Esophagus muscularis mucosa (tissue), 4 donors: ENCODE measurements at regions of chr2 and their contacts with region 1.

Region 1: GRCh38 chr2:238370823-238371372 is 50.6 kb downstream of the TRAF3IP1 start:
- DNase-seq: no peak
- H3K4me3 ChIP-seq: no peak overlapping the region
- H3K27ac ChIP-seq: no peak overlapping the region
- H3K4me1 ChIP-seq: peaks cover 0 to 9% (median 5%) of the 10 kb centered on the region in 4 donors
- H3K27me3 ChIP-seq: no peaks in the 10 kb centered on the region
- CTCF ChIP-seq: peak; percentile 73 to 86 (median 77)
- EP300 ChIP-seq: no peak
- POLR2A ChIP-seq: no peak

Region 2: DNA sequence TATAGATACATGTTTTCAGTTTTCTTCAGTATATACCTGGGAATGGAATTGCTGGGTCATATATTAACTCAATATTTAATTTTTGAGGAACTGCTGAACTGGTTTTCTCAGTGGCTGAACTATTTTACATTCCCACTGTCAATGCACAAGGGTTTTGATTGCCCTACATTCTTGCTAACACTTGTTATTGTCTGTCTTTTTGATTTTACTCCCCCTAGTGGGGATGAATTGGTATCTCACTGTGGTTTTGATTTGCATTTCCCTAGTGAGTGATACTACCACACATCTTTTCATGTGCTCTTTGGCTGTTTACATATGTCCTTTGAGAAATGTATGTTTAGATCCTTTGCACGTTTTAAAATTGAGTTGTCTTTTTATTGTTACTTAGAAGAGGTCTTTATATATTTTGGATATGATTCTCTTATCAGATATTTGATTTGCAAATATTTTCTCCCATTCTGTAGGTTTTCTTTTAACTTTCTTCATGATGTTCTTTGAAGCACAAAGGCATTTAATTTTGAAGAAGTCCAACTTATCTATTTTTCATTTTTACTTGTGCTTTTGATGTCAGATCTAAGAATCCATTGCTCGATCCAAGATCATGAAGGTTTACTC is 92.0 kb after region 1 on chr2:
- intact Hi-C with region 1: loop called (anchors 2 kb)
- DNase-seq: no peak
- H3K4me3 ChIP-seq: no peak overlapping the region
- H3K27ac ChIP-seq: no peak overlapping the region
- H3K4me1 ChIP-seq: peaks cover 18 to 22% (median 19%) of the 10 kb centered on the region in 4 donors
- H3K27me3 ChIP-seq: no peaks in the 10 kb centered on the region
- CTCF ChIP-seq: peak; percentile 69 to 76 (median 74)
- EP300 ChIP-seq: no peak
- POLR2A ChIP-seq: no peak

Region 3: GRCh38 chr2:238554468-238555315 is 183.8 kb after region 1 on chr2:
- intact Hi-C with region 1: no loop called
- DNase-seq: no peak
- H3K4me3 ChIP-seq: no peak overlapping the region
- H3K27ac ChIP-seq: no peak overlapping the region
- H3K4me1 ChIP-seq: peaks cover 0 to 11% (median 5%) of the 10 kb centered on the region in 4 donors
- H3K27me3 ChIP-seq: peaks cover 0 to under 1% (median 0%) of the 10 kb centered on the region in 4 donors
- CTCF ChIP-seq: no peak
- EP300 ChIP-seq: no peak
- POLR2A ChIP-seq: no peak

Region 4: GRCh38 chr2:238945433-238946150 is 574.7 kb after region 1 on chr2:
- intact Hi-C with region 1: loop called (anchors 10 kb)
- DNase-seq: peak; percentile 88
- H3K4me3 ChIP-seq: no peak overlapping the region
- H3K27ac ChIP-seq: no peak overlapping the region
- H3K4me1 ChIP-seq: peaks cover 0 to 16% (median 7%) of the 10 kb centered on the region in 4 donors
- H3K27me3 ChIP-seq: peaks cover 0 to 6% (median 0%) of the 10 kb centered on the region in 4 donors
- CTCF ChIP-seq: peak; percentile 75 to 93 (median 81)
- EP300 ChIP-seq: no peak
- POLR2A ChIP-seq: no peak